ENCODE measurements at regions of chr14 and their contacts with region 1.

Region 1: DNA sequence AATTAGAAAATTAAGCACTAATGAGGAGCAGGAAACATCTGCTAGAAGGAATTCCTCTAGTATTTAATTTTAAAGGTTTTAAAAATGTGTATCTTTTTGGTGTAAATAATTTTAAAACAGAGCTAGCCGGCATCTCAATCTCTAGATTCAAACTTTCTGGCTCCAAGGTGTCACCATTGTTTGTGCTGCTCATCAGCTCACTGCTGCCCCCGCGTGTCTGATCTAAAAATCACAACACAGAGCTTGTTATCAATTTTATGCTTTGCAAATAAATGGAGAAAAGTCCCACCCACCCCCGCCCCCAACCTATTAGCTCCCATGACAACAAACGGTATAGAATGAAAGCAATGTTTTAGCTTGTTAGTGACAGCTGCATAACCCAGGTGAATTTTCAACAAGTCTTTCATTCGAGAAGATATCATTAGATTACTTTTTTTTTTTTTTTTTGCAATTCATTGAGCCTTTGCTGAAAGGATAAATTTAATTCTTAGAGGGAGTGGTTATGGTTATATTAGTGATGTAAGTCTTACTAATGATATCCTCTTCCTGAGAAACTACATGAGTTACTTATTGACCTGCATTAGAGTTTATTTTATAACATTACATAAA is 11.3 kb upstream of the ABHD12B start:
- DNase-seq: peak; percentile 50
- ATAC-seq: peak; percentile 83
- H3K4me3 ChIP-seq: peak overlapping the region; percentile 77
- H3K27ac ChIP-seq: peak overlapping the region; percentile 60
- H3K4me1 ChIP-seq: peaks cover 9% of the 10 kb centered on the region
- H3K27me3 ChIP-seq: no peaks in the 10 kb centered on the region; a peak in 1 of 4 replicates
- CTCF ChIP-seq: peak; percentile 61 to 79 (median 71)
- EP300 ChIP-seq: no peak
- POLR2A ChIP-seq: no peak
- RAD21 ChIP-seq: peak; percentile 94

Region 2: GRCh38 chr14:50551877-50552276 is 308.7 kb before region 1 on chr14:
- CTCF ChIA-PET with region 1: no interaction called
- POLR2A ChIA-PET with region 1: no interaction called
- RAD21 ChIA-PET with region 1: no interaction called
- SMC1A ChIA-PET with region 1: no interaction called
- in situ Hi-C with region 1: no loop called
- intact Hi-C with region 1: no loop called
- DNase-seq: no peak
- ATAC-seq: no peak
- H3K4me3 ChIP-seq: no peak overlapping the region
- H3K27ac ChIP-seq: no peak overlapping the region
- H3K4me1 ChIP-seq: no peaks in the 10 kb centered on the region
- H3K27me3 ChIP-seq: no peaks in the 10 kb centered on the region
- CTCF ChIP-seq: no peak
- EP300 ChIP-seq: no peak
- POLR2A ChIP-seq: no peak
- RAD21 ChIP-seq: no peak

Region 3: DNA sequence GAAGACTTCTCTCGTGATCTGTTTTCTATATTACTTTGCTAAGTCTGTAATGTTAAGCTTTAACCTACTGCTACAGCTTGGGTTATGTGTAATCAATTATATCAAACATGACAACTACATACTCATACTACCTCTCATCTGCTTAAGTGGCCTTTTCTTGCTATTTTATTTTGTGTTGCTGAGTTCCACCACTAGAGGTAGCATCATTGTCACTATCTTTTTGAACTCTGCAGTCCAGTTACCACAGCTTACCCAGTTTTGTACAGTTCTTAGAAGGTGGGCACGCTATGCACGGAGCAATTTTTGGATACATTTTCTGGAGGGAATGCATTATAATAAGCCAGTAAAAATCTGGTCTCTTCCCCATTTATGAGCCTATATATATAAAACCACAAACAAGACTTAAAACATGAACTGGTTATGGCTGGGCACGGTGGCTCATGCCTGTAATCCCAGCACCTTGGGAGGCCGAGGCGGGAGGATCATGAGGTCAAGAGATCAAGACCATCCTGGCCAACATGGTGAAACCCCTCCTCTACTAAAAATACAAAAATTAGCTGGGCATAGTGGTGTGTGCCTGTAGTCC is 240.9 kb before region 1 on chr14:
- CTCF ChIA-PET with region 1: interaction called, 42 read pairs
- POLR2A ChIA-PET with region 1: no interaction called
- RAD21 ChIA-PET with region 1: interaction called, 27 read pairs
- SMC1A ChIA-PET with region 1: interaction called, 24 read pairs
- in situ Hi-C with region 1: loop called (anchors 25 kb)
- intact Hi-C with region 1: loop called (anchors 5 kb)
- DNase-seq: peak; percentile 21
- ATAC-seq: peak; percentile 92
- H3K4me3 ChIP-seq: no peak overlapping the region
- H3K27ac ChIP-seq: no peak overlapping the region
- H3K4me1 ChIP-seq: no peaks in the 10 kb centered on the region
- H3K27me3 ChIP-seq: no peaks in the 10 kb centered on the region
- CTCF ChIP-seq: peak; percentile 69 to 80 (median 76)
- EP300 ChIP-seq: no peak
- POLR2A ChIP-seq: no peak
- RAD21 ChIP-seq: peak; percentile 83

Region 4: GRCh38 chr14:50736932-50737419 is 123.6 kb before region 1 on chr14:
- CTCF ChIA-PET with region 1: interaction called, 12 read pairs
- POLR2A ChIA-PET with region 1: no interaction called
- RAD21 ChIA-PET with region 1: interaction called, 24 read pairs
- SMC1A ChIA-PET with region 1: interaction called, 22 read pairs
- in situ Hi-C with region 1: no loop called
- intact Hi-C with region 1: no loop called
- DNase-seq: peak; percentile 79
- ATAC-seq: peak; percentile 89
- H3K4me3 ChIP-seq: no peak overlapping the region
- H3K27ac ChIP-seq: peak overlapping the region; percentile 62
- H3K4me1 ChIP-seq: peaks cover 35% of the 10 kb centered on the region
- H3K27me3 ChIP-seq: no peaks in the 10 kb centered on the region
- CTCF ChIP-seq: no peak
- EP300 ChIP-seq: peak; percentile 66 to 78; a peak in 3 of 4 replicates
- POLR2A ChIP-seq: peak; percentile 46
- RAD21 ChIP-seq: 0 out of 2 replicates have a peak, but pooled peaks have one; percentile 11

Region 5: GRCh38 chr14:50778721-50779483 is 81.7 kb before region 1 on chr14:
- CTCF ChIA-PET with region 1: interaction called, 317 read pairs
- POLR2A ChIA-PET with region 1: interaction called, 9 read pairs
- RAD21 ChIA-PET with region 1: interaction called, 186 read pairs
- SMC1A ChIA-PET with region 1: interaction called, 233 read pairs
- in situ Hi-C with region 1: no loop called
- intact Hi-C with region 1: loop called (anchors 2 kb)
- DNase-seq: no peak
- ATAC-seq: no peak
- H3K4me3 ChIP-seq: no peak overlapping the region
- H3K27ac ChIP-seq: no peak overlapping the region; the same call in 1 of the 2 replicates
- H3K4me1 ChIP-seq: no peaks in the 10 kb centered on the region; the same call in 1 of the 2 replicates
- H3K27me3 ChIP-seq: no peaks in the 10 kb centered on the region
- CTCF ChIP-seq: no peak
- EP300 ChIP-seq: no peak
- POLR2A ChIP-seq: no peak
- RAD21 ChIP-seq: no peak

Region 6: GRCh38 chr14:50823051-50823761 is 37.4 kb before region 1 on chr14:
- CTCF ChIA-PET with region 1: interaction called, 98 read pairs
- POLR2A ChIA-PET with region 1: interaction called, 36 read pairs
- RAD21 ChIA-PET with region 1: interaction called, 106 read pairs
- SMC1A ChIA-PET with region 1: interaction called, 180 read pairs
- in situ Hi-C with region 1: no loop called
- intact Hi-C with region 1: no loop called
- DNase-seq: peak; percentile 39
- ATAC-seq: peak; percentile 38
- H3K4me3 ChIP-seq: peak overlapping the region; percentile 74
- H3K27ac ChIP-seq: peak overlapping the region; percentile 88
- H3K4me1 ChIP-seq: peaks cover 37% of the 10 kb centered on the region
- H3K27me3 ChIP-seq: no peaks in the 10 kb centered on the region
- CTCF ChIP-seq: no peak
- EP300 ChIP-seq: no peak
- POLR2A ChIP-seq: no peak; the same call in 1 of the 2 replicates
- RAD21 ChIP-seq: no peak

Region 7: DNA sequence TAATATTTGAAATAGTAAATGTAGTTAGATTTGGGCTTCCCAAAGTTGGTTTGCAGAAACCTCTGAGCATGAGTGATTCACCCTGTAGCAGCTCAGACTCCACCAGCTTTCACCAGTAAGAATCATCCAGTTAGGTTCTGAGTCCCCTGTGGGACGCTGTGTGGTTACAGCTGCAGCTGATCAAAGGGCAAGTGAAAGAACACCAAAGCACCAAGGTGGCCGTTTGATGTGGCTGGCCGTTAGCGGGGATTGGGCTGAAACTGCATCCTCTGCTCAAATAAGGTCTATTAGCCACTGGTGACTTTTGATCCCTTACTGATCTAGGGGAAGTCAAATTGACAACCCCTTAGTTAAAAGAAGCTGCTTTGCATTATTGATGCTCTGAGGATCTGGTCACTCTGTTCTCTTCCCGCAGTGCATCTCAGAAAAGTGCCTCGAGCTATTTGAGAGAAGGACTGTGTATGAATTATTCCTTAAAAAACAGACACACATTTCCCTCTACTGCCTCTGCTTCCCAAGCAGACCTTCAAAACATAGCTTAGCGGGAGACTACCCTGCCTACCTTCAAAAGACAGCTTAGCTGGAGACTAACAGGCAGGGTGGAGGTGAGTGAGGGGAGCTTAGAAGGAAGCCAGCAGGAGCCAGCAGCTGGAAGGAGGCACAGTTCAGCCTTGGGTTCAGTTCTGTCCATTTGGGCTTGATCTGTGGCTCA is 14.9 kb after region 1 on chr14:
- CTCF ChIA-PET with region 1: interaction called, 17 read pairs
- POLR2A ChIA-PET with region 1: interaction called, 4 read pairs
- RAD21 ChIA-PET with region 1: interaction called, 21 read pairs
- SMC1A ChIA-PET with region 1: interaction called, 21 read pairs
- in situ Hi-C with region 1: no loop called
- intact Hi-C with region 1: no loop called
- DNase-seq: peak; percentile 78
- ATAC-seq: peak; percentile 98
- H3K4me3 ChIP-seq: no peak overlapping the region; the same call in 1 of the 2 replicates
- H3K27ac ChIP-seq: no peak overlapping the region
- H3K4me1 ChIP-seq: peaks cover 11% of the 10 kb centered on the region
- H3K27me3 ChIP-seq: peaks cover 2 to 11% of the 10 kb centered on the region in 2 experiments; a peak in 3 of 4 replicates
- CTCF ChIP-seq: no peak
- EP300 ChIP-seq: peak; percentile 44 to 78; a peak in 2 of 4 replicates
- POLR2A ChIP-seq: no peak
- RAD21 ChIP-seq: no peak

Region 8: DNA sequence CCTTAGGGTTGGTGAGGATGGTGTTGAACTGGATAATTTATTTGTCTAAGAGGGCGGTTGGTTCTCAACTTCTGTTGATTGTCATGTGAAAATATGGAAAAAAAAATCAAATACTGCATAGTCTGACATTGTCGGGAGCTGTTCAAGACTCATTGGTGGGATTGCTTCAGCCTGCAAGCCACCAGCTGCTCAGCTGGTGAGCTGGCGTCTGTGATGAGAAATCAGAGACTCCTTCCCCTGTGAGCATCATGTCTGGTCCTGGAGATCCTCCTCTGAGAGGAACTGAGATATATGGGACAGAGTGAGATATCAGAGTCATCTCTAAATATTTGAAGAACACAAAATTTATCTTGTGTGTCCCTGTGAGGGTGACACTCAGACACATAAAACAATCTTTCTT is 184.4 kb after region 1 on chr14:
- CTCF ChIA-PET with region 1: no interaction called
- POLR2A ChIA-PET with region 1: no interaction called
- RAD21 ChIA-PET with region 1: no interaction called
- SMC1A ChIA-PET with region 1: no interaction called
- in situ Hi-C with region 1: no loop called
- intact Hi-C with region 1: no loop called
- DNase-seq: no peak
- ATAC-seq: no peak
- H3K4me3 ChIP-seq: no peak overlapping the region
- H3K27ac ChIP-seq: no peak overlapping the region
- H3K4me1 ChIP-seq: no peaks in the 10 kb centered on the region
- H3K27me3 ChIP-seq: no peaks in the 10 kb centered on the region
- CTCF ChIP-seq: no peak
- EP300 ChIP-seq: no peak
- POLR2A ChIP-seq: no peak
- RAD21 ChIP-seq: no peak

Measured in GM12878 (cell line).